T-cell (primary cell): ENCODE measurements at regions of chr7 and their contacts with region 1.

Region 1: GRCh38 chr7:7103343-7104313 is 78.7 kb upstream of the C1GALT1 start:
- DNase-seq: peak in 6 of 35 experiments; percentile 4 to 80 (median 8)
- ATAC-seq: peak; percentile 70 to 86 (median 76)
- H3K4me3 ChIP-seq: no peak overlapping the region
- H3K4me3 Mint-ChIP-seq: no peak overlapping the region
- H3K27ac ChIP-seq: no peak overlapping the region
- H3K27ac Mint-ChIP-seq: peak overlapping the region in 1 of 2 donors; percentile 34
- H3K4me1 ChIP-seq: peaks cover 5 to 8% of the 10 kb centered on the region in 2 experiments
- H3K4me1 Mint-ChIP-seq: peaks cover 22 to 27% (median 25%) of the 10 kb centered on the region in 3 donors
- H3K27me3 ChIP-seq: peaks cover 0 to 3% of the 10 kb centered on the region in 2 experiments
- H3K27me3 Mint-ChIP-seq: no peaks in the 10 kb centered on the region

Region 2: DNA sequence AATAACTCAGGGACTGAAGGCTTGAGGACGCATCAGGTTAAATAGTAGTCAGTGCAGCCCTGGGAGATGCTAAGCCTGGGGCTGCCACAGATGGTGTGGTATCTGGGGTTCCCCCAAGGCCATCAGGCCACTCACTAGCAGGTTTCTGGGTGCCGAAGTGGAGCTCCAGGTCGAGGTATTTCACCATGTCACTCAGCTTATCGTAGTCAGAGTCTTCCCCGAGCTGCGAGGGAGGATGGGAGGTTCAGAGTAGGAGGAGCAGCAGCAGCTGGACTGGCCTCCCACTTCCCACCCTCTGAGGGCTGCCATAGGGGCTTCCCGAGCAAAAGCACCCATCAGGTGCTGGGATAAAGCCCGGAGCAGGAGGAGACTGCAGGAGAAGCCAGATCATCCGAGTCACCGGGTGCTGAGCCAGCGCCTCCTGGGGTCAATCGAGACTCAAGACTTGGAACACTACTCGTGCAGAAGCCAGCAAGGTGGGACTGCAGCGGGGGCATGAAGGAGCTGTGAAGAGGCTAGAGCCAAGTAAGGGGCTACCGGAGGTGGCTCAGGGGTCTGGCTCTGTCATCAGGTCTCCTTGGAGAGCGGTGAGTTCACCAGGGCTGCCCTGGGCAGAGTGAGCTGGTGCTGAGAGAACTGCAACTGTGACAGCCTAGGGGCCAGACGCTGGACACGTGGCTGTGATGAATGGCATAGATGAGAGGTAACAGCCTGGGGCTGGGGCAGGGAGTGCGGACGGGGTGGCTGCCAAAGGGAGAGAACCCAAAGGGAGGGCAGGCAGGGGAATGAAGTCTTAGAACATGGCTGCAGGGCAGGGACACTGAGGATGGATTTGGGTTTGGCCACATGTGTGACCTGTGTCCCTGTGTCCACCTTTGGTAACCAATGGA is 597.7 kb before region 1 on chr7:
- CTCF ChIA-PET with region 1: no interaction called
- POLR2A ChIA-PET with region 1: no interaction called
- DNase-seq: no peak
- ATAC-seq: no peak
- H3K4me3 ChIP-seq: no peak overlapping the region
- H3K4me3 Mint-ChIP-seq: peak overlapping the region; percentile 21 to 92 (median 21)
- H3K27ac ChIP-seq: no peak overlapping the region
- H3K27ac Mint-ChIP-seq: no peak overlapping the region
- H3K4me1 ChIP-seq: peaks cover 2 to 16% of the 10 kb centered on the region in 2 experiments
- H3K4me1 Mint-ChIP-seq: peaks cover 0 to 6% (median 3%) of the 10 kb centered on the region in 3 donors
- H3K27me3 ChIP-seq: peaks cover 0 to 3% of the 10 kb centered on the region in 2 experiments
- H3K27me3 Mint-ChIP-seq: no peaks in the 10 kb centered on the region

Region 3: GRCh38 chr7:7182156-7183060 is 78.8 kb after region 1 on chr7 and contains the start of gene C1GALT1:
- CTCF ChIA-PET with region 1: interaction called, 5 to 11 read pairs
- POLR2A ChIA-PET with region 1: interaction called in 1 of 2 experiments, 7 read pairs
- DNase-seq: peak; percentile 93 to 100 (median 97)
- ATAC-seq: peak; percentile 85 to 89 (median 86)
- H3K4me3 ChIP-seq: peak within 1 kb of the TSS; percentile 96 to 98
- H3K4me3 Mint-ChIP-seq: peak within 1 kb of the TSS; percentile 86 to 93 (median 91)
- H3K27ac ChIP-seq: peak within 1 kb of the TSS; percentile 91
- H3K27ac Mint-ChIP-seq: peak within 1 kb of the TSS; percentile 96 to 98
- H3K4me1 ChIP-seq: peaks cover 22 to 37% of the 10 kb centered on the region in 2 experiments
- H3K4me1 Mint-ChIP-seq: peaks cover 8 to 15% (median 12%) of the 10 kb centered on the region in 3 donors
- H3K27me3 ChIP-seq: no peaks in the 10 kb centered on the region
- H3K27me3 Mint-ChIP-seq: no peaks in the 10 kb centered on the region
- total RNA-seq, gene C1GALT1: 32.9 to 45.0 (median 44.0) TPM

Region 4: GRCh38 chr7:7542251-7542835 is 438.7 kb after region 1 on chr7:
- CTCF ChIA-PET with region 1: interaction called, 6 to 33 read pairs
- POLR2A ChIA-PET with region 1: interaction called in 1 of 2 experiments, 3 read pairs
- DNase-seq: no peak
- ATAC-seq: no peak
- H3K4me3 ChIP-seq: no peak overlapping the region
- H3K4me3 Mint-ChIP-seq: no peak overlapping the region
- H3K27ac ChIP-seq: no peak overlapping the region
- H3K27ac Mint-ChIP-seq: no peak overlapping the region
- H3K4me1 ChIP-seq: no peaks in the 10 kb centered on the region
- H3K4me1 Mint-ChIP-seq: no peaks in the 10 kb centered on the region
- H3K27me3 ChIP-seq: no peaks in the 10 kb centered on the region
- H3K27me3 Mint-ChIP-seq: no peaks in the 10 kb centered on the region